Activated CD4-positive, alpha-beta memory T cell treated with anti-CD3 and anti-CD28 coated beads, Interleukin-2, amount 10 ng/mL, durations not matched to agents 7 days and 5 days (primary cell): ENCODE measurements at regions of chr17 and their contacts with region 1.

Region 1: GRCh38 chr17:7296189-7296902 is 1.9 kb upstream of the YBX2 start:
- DNase-seq: peak; percentile 71
- H3K4me3 Mint-ChIP-seq: no peak overlapping the region
- H3K27ac Mint-ChIP-seq: no peak overlapping the region
- H3K4me1 Mint-ChIP-seq: peaks cover 29% of the 10 kb centered on the region
- H3K27me3 Mint-ChIP-seq: peaks cover 40% of the 10 kb centered on the region

Region 2: DNA sequence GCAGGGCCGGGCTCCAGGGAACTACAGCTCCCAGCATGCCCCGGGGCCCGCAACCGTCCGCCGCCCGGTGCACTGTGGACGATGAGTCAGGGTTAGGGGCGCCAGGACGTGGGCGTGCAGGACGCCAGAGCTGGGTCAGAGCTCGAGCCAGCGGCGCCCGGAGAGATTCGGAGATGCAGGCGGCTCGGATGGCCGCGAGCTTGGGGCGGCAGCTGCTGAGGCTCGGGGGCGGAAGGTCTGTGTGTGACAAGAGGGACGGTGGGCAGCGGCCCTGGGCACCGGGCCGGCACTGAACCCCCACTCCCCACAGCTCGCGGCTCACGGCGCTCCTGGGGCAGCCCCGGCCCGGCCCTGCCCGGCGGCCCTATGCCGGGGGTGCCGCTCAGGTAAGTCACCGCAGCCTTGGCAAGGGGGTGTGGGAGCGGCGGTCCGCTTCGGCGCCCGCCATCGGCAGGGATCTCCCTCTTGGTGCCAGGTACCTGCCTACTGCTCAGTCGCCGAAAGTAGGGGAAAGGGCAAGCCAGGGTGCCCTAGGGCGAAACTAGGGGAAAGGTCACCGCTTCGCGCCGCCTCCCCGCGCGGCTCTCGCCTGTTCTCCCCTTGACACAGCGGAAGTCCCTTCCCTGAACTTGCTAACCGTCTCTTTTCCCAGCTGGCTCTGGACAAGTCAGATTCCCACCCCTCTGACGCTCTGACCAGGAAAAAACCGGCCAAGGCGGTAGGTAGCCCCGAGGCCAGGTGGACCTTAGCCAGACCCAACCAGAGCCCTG is 76.3 kb before region 1 on chr17 and contains the starts of genes ACADVL and DLG4:
- CTCF ChIA-PET with region 1: interaction called, 61 read pairs
- POLR2A ChIA-PET with region 1: interaction called, 9 read pairs
- DNase-seq: peak; percentile 84
- H3K4me3 Mint-ChIP-seq: peak within 1 kb of the TSS; percentile 93
- H3K27ac Mint-ChIP-seq: peak within 1 kb of the TSS; percentile 89
- H3K4me1 Mint-ChIP-seq: peaks cover 48% of the 10 kb centered on the region
- H3K27me3 Mint-ChIP-seq: no peaks in the 10 kb centered on the region
- total RNA-seq, gene ACADVL: 364 to 370 TPM
- total RNA-seq, gene DLG4: 5.2 to 5.3 TPM

Region 3: DNA sequence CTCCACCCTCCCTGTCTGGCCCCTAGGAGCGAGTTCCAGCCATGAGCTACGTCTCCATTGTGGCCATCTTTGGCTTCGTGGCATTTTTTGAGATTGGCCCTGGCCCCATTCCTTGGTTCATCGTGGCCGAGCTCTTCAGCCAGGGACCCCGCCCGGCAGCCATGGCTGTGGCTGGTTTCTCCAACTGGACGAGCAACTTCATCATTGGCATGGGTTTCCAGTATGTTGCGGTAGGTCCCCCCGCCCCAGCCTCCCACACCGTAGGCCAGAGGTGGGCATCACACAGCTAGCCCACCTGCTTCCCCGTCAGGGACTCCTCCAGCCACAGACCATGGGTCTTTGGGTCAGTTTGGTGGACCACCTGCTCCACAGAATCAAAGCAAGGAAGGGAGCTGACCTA is 10.7 kb before region 1 on chr17:
- CTCF ChIA-PET with region 1: interaction called, 13 read pairs
- POLR2A ChIA-PET with region 1: interaction called, 3 read pairs
- DNase-seq: no peak
- H3K4me3 Mint-ChIP-seq: no peak overlapping the region
- H3K27ac Mint-ChIP-seq: no peak overlapping the region
- H3K4me1 Mint-ChIP-seq: peaks cover 17% of the 10 kb centered on the region
- H3K27me3 Mint-ChIP-seq: peaks cover 51% of the 10 kb centered on the region

Region 4: DNA sequence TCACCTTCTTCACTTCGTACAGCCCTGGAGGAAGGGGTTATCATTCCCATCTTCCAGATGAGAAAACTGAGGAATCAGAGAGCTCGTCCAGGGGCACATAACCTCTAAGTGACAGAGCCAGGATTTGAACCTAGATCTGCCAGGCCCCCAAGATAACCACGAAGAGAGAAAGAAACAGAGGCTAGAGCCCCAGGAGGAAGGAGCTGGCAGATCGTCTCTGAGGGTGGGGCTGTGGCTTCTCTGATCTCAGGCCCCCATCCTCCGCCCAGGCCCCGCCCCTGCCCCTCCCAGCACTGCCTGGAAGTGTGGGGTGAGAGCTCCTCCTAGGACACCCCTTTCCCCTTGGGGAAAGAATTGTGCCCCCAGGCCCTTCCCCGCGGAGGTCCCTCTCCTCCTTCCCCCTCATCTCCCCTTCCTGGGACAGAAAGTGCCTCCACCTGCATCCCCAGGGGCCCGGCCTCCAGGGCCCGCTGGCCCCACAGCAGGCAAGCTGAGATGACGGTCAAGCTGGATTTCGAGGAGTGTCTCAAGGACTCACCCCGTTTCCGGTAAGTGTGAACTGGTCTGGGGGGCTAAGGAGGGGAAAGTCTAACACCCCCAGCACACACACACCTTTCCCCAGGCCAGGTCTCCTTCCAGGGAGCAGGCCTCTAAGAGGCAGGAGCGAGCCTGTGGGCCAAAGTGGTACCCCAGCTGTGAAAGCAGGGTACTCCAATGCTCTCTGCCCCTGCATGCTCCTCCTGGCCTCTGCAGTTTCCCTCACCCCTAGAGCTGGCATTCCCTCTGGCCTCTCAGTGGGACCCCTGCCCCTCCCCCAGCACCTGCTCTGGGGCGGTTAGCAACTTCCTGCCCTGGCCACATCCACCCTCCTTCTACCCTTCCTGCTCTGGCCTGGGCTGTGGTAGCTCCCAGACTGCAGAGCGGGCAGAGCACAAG is 40.2 kb after region 1 on chr17 and contains the start of gene ACAP1:
- CTCF ChIA-PET with region 1: interaction called, 13 read pairs
- POLR2A ChIA-PET with region 1: interaction called, 10 read pairs
- DNase-seq: peak; percentile 93
- H3K4me3 Mint-ChIP-seq: peak within 1 kb of the TSS; percentile 91
- H3K27ac Mint-ChIP-seq: peak within 1 kb of the TSS; percentile 91
- H3K4me1 Mint-ChIP-seq: peaks cover 59% of the 10 kb centered on the region
- H3K27me3 Mint-ChIP-seq: no peaks in the 10 kb centered on the region
- total RNA-seq, gene ACAP1: 682 to 709 TPM